MCF 10A (cell line): ENCODE measurements at regions of chr9 and their contacts with region 1.

Region 1: DNA sequence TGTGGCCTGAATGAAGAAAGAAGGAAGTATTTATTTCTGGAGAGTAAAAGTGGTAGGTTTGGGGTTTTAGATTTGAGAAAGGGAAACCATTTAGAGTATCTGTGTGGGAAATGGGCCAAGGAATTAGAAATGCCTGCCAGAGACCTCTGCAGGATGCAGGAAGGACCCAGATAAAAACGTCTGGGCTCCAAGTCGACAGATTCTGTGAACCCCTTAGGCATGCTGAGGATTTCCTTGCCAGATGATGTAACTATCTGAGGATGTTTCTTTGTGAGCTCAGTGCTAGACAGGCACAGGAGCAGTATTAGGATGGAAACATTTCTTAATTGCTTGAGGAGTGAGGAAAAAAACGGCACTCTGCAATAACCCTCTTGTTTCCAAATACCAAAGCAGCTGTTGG is 251.8 kb upstream of the DMRT1 start:
- DNase-seq: peak; percentile 77
- H3K4me3 Mint-ChIP-seq: peak overlapping the region; percentile 28
- H3K27ac Mint-ChIP-seq: peak overlapping the region; percentile 87
- H3K4me1 Mint-ChIP-seq: peaks cover 49% of the 10 kb centered on the region
- H3K27me3 Mint-ChIP-seq: no peaks in the 10 kb centered on the region
- CTCF ChIP-seq: no peak

Region 2: GRCh38 chr9:551986-552929 is 37.5 kb before region 1 on chr9:
- CTCF ChIA-PET with region 1: no interaction called
- POLR2A ChIA-PET with region 1: interaction called, 20 read pairs
- intact Hi-C with region 1: no loop called
- DNase-seq: peak; percentile 22
- H3K4me3 Mint-ChIP-seq: no peak overlapping the region
- H3K27ac Mint-ChIP-seq: no peak overlapping the region
- H3K4me1 Mint-ChIP-seq: peaks cover 30% of the 10 kb centered on the region
- H3K27me3 Mint-ChIP-seq: no peaks in the 10 kb centered on the region
- CTCF ChIP-seq: no peak

Region 3: DNA sequence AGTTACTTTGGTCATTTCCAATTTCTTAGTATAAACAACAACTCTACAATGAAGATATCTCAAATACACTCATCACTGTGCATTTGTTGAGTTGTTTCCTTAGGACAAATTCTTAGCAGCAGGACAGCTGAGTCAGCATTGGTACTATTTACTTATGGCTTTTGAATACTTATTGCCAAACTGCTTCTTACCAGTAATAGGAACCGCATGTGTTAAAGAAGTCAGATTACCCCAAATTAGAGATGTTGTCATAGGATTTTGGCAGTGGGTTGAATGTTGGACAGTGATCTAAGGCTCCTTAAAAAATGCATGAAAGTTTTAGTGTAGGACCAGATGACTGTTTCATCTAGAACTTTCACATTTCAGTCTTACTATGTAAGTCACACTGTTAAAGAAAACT is 28.3 kb before region 1 on chr9:
- CTCF ChIA-PET with region 1: no interaction called
- POLR2A ChIA-PET with region 1: interaction called, 20 read pairs
- intact Hi-C with region 1: no loop called
- DNase-seq: peak; percentile 68
- H3K4me3 Mint-ChIP-seq: peak overlapping the region; percentile 10
- H3K27ac Mint-ChIP-seq: peak overlapping the region; percentile 79
- H3K4me1 Mint-ChIP-seq: peaks cover 48% of the 10 kb centered on the region
- H3K27me3 Mint-ChIP-seq: no peaks in the 10 kb centered on the region
- CTCF ChIP-seq: no peak

Region 4: GRCh38 chr9:573671-574410 is 15.9 kb before region 1 on chr9:
- CTCF ChIA-PET with region 1: interaction called, 5 read pairs
- POLR2A ChIA-PET with region 1: interaction called, 16 read pairs
- intact Hi-C with region 1: no loop called
- DNase-seq: no peak
- H3K4me3 Mint-ChIP-seq: no peak overlapping the region
- H3K27ac Mint-ChIP-seq: no peak overlapping the region
- H3K4me1 Mint-ChIP-seq: peaks cover 15% of the 10 kb centered on the region
- H3K27me3 Mint-ChIP-seq: no peaks in the 10 kb centered on the region
- CTCF ChIP-seq: no peak

Region 5: GRCh38 chr9:602732-603525 is 13.2 kb after region 1 on chr9:
- CTCF ChIA-PET with region 1: interaction called, 4 read pairs
- POLR2A ChIA-PET with region 1: interaction called, 21 read pairs
- intact Hi-C with region 1: no loop called
- DNase-seq: no peak
- H3K4me3 Mint-ChIP-seq: no peak overlapping the region
- H3K27ac Mint-ChIP-seq: no peak overlapping the region
- H3K4me1 Mint-ChIP-seq: peaks cover 25% of the 10 kb centered on the region
- H3K27me3 Mint-ChIP-seq: no peaks in the 10 kb centered on the region
- CTCF ChIP-seq: no peak